Mammary epithelial cell (primary cell): ENCODE measurements at regions of chr12 and their contacts with region 1.

Region 1: DNA sequence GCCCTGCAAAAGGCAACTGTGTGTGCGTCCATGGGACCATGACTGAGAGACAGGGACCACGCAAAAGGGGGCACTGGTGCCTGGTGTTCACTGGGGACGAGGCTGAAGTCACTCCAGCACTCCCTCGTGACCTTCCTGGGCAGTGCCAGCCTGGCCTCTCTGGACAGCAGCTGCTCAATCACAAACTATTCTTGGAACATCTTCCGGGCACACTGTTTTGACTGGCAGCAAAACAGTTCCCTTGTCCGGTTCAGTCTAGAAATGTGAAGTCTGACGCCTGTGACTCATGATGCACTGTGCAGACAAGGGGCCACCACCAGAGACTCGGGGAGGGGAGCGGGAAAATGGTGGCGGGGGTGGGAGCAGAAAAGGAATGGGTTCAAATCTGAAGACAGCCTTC is 20.8 kb downstream of the SNRNP35 start:
- DNase-seq: no peak
- H3K4me3 ChIP-seq: no peak overlapping the region
- H3K27ac ChIP-seq: no peak overlapping the region
- H3K4me1 ChIP-seq: no peaks in the 10 kb centered on the region
- H3K27me3 ChIP-seq: no peaks in the 10 kb centered on the region
- CTCF ChIP-seq: no peak

Region 2: DNA sequence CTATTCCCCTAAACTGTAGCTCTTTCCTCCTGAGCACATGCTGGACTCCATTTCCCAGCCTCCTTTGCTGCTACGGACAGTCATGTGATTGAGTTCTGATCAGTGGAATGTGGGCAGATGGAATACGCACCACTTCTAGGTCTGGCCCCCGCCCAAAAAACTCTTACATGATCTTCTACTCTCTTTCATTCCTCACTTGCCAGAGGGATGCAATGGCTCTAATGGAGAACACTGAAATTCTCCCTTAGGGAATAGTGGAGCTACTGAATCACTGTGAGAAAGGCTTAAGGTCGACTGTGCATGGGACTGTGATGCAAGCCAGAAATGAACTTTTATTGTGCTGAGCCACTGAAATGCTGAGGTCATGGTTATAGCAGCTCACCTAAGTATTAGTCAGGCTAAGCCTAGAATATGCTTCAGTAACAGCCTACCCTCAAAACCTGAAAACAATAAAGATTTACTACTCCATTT is 92.6 kb after region 1 on chr12:
- CTCF ChIA-PET with region 1: no interaction called
- dilution Hi-C with region 1: loop called (anchors 5 kb)
- in situ Hi-C with region 1: no loop called
- intact Hi-C with region 1: no loop called
- DNase-seq: peak; percentile 56
- H3K4me3 ChIP-seq: no peak overlapping the region
- H3K27ac ChIP-seq: no peak overlapping the region
- H3K4me1 ChIP-seq: no peaks in the 10 kb centered on the region
- H3K27me3 ChIP-seq: no peaks in the 10 kb centered on the region
- CTCF ChIP-seq: no peak